ENCODE measurements at regions of chr11 and their contacts with region 1.

Region 1: DNA sequence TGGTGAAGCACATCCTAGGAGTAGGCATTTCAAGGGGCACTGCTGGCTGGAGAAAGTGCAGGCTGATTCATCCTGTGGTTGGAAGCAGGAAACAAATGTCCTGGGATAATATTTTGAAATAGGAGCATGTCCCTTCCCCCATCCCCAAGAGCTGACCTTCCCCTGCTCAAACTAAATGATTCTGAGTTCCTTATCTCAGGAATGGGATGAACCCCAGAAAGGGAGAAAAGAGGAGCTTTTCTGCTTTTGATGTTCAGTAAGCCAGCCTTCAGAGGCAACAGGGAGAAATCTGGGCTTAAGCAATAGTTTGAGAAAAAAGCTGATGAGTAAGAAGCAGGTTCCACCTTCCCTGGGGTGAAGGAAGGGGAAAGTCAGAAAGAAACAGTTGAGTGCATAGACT is 19.5 kb upstream of the SPON1 start:
- DNase-seq: no peak
- ATAC-seq: no peak
- H3K4me3 ChIP-seq: no peak overlapping the region
- H3K4me3 Mint-ChIP-seq: no peak overlapping the region
- H3K27ac ChIP-seq: no peak overlapping the region
- H3K27ac Mint-ChIP-seq: no peak overlapping the region
- H3K4me1 ChIP-seq: peaks cover 44% of the 10 kb centered on the region
- H3K4me1 Mint-ChIP-seq: peaks cover 57% of the 10 kb centered on the region
- H3K27me3 ChIP-seq: no peaks in the 10 kb centered on the region
- H3K27me3 Mint-ChIP-seq: no peaks in the 10 kb centered on the region
- CTCF ChIP-seq: no peak

Region 2: DNA sequence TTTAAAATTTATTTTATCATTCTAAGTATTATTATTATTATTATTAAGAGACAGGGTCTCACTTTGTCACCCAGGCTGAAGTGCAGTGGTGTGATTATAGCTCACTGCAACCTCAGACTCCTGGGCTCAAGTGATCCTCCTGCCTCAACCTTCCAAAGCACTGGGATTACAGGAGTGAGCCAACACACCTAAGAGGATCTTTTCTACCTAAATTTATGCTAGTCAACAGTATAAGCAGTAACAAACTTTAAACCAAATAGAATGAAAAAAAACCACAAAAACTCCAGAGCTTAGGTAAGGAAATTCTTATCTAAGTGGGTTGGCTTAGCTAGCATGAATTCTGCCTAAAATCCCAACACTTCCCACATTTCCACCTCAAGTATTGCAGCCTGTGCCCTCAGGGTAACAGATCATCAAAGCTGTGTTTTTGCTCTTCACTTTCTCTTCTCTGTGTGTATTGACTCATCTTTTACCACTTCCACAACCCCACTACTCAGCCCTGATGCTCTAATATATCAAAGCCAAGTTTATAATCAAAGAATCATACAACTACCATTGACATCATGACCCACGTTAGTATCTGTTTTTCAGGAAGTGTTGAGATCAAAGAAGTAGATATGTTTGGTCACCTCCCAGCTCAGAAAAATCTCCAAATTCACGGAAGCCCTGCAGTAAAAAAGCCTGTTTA is 74.1 kb before region 1 on chr11:
- CTCF ChIA-PET with region 1: no interaction called
- POLR2A ChIA-PET with region 1: interaction called, 12 read pairs
- intact Hi-C with region 1: loop called (anchors 1 to 5 kb)
- DNase-seq: peak in 5 of 9 experiments; percentile 12 to 90 (median 57)
- ATAC-seq: peak; percentile 88
- H3K4me3 ChIP-seq: no peak overlapping the region
- H3K4me3 Mint-ChIP-seq: peak overlapping the region; percentile 1
- H3K27ac ChIP-seq: peak overlapping the region; percentile 54 to 82
- H3K27ac Mint-ChIP-seq: peak overlapping the region; percentile 93
- H3K4me1 ChIP-seq: peaks cover 21% of the 10 kb centered on the region
- H3K4me1 Mint-ChIP-seq: peaks cover 33% of the 10 kb centered on the region
- H3K27me3 ChIP-seq: no peaks in the 10 kb centered on the region
- H3K27me3 Mint-ChIP-seq: no peaks in the 10 kb centered on the region
- CTCF ChIP-seq: no peak

Region 3: DNA sequence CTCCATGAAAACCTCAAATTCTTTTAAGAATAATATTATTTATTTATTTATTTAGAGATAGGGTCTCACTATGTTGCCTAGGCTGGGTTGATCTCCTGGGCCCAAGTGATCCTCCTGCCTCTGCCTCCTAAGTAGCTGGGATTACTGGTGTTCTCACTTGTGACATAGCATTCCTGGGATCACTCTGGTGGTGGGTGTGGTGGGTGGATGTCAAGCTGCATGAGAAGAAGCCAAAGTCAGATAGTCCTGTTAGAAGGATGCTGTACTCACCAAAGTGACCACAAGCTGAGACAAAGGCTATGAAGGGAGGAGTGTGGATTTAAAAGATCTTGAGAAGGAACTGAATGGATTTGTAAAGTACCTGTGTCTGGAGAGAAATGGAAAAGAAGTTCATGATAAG is 68.4 kb before region 1 on chr11:
- CTCF ChIA-PET with region 1: no interaction called
- POLR2A ChIA-PET with region 1: interaction called, 12 read pairs
- intact Hi-C with region 1: loop called (anchors 1 to 5 kb)
- DNase-seq: no peak
- ATAC-seq: no peak
- H3K4me3 ChIP-seq: no peak overlapping the region
- H3K4me3 Mint-ChIP-seq: no peak overlapping the region
- H3K27ac ChIP-seq: no peak overlapping the region
- H3K27ac Mint-ChIP-seq: no peak overlapping the region
- H3K4me1 ChIP-seq: peaks cover 11% of the 10 kb centered on the region
- H3K4me1 Mint-ChIP-seq: peaks cover 18% of the 10 kb centered on the region
- H3K27me3 ChIP-seq: no peaks in the 10 kb centered on the region
- H3K27me3 Mint-ChIP-seq: no peaks in the 10 kb centered on the region
- CTCF ChIP-seq: no peak

Region 4: GRCh38 chr11:13907678-13908077 is 35.3 kb before region 1 on chr11:
- CTCF ChIA-PET with region 1: interaction called, 5 read pairs
- POLR2A ChIA-PET with region 1: no interaction called
- intact Hi-C with region 1: loop called in 1 of 2 experiments (anchors 5 kb)
- DNase-seq: no peak
- ATAC-seq: no peak
- H3K4me3 ChIP-seq: no peak overlapping the region
- H3K4me3 Mint-ChIP-seq: no peak overlapping the region
- H3K27ac ChIP-seq: no peak overlapping the region
- H3K27ac Mint-ChIP-seq: no peak overlapping the region
- H3K4me1 ChIP-seq: no peaks in the 10 kb centered on the region
- H3K4me1 Mint-ChIP-seq: no peaks in the 10 kb centered on the region
- H3K27me3 ChIP-seq: no peaks in the 10 kb centered on the region
- H3K27me3 Mint-ChIP-seq: no peaks in the 10 kb centered on the region
- CTCF ChIP-seq: no peak

Region 5: DNA sequence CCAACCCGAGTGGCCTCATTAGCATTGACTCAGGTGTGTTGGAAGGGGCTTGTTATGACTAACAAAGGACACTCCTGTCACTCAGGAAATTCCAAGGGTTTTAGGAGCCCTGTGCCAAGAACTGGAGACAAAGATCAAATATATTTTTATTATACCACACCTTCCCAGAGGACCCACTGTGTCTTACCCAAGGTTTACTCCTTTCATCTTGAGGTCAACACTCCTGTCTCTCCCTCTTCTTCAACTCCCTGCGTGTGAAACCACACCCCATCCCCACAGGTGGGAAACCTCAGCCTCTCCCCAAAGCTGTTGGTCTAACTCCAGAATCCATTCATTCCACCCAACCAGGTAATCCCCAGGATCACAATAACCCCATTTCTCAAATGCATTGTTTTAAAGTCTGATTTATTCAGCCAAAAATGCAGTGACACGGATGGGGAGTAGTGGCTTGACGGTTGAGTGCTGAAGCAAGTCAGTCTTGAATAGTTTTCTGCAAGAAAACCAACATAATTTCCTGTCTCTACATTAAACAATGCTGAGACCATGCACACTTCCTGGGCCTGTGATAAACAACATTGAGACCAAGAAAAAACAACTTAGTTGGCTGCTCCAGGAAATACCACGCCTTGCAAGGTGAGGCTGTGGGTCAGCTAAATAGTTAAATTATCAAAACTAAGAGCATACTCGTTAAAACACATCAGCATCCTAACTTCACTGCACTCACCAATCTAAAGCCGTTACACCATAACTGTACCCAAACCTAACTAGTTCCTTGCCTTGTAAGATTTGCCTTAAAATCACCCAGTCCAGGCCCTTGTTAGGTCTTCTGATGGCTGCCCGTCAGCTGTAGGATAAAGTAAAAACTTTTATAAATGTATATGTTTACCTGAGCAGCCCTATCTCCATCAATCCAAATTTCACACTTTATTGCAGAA is 19.0 kb before region 1 on chr11:
- CTCF ChIA-PET with region 1: interaction called, 10 read pairs
- POLR2A ChIA-PET with region 1: interaction called, 37 read pairs
- intact Hi-C with region 1: loop called (anchors 2 kb)
- DNase-seq: peak in 8 of 9 experiments; percentile 19 to 66 (median 30)
- ATAC-seq: peak; percentile 93
- H3K4me3 ChIP-seq: peak overlapping the region; percentile 12
- H3K4me3 Mint-ChIP-seq: peak overlapping the region; percentile 70
- H3K27ac ChIP-seq: peak overlapping the region; percentile 32 to 86
- H3K27ac Mint-ChIP-seq: peak overlapping the region; percentile 96
- H3K4me1 ChIP-seq: peaks cover 49% of the 10 kb centered on the region
- H3K4me1 Mint-ChIP-seq: peaks cover 62% of the 10 kb centered on the region
- H3K27me3 ChIP-seq: no peaks in the 10 kb centered on the region
- H3K27me3 Mint-ChIP-seq: no peaks in the 10 kb centered on the region
- CTCF ChIP-seq: no peak